GM13977 (cell line): ENCODE measurements at regions of chr13 and their contacts with region 1.

Region 1: DNA sequence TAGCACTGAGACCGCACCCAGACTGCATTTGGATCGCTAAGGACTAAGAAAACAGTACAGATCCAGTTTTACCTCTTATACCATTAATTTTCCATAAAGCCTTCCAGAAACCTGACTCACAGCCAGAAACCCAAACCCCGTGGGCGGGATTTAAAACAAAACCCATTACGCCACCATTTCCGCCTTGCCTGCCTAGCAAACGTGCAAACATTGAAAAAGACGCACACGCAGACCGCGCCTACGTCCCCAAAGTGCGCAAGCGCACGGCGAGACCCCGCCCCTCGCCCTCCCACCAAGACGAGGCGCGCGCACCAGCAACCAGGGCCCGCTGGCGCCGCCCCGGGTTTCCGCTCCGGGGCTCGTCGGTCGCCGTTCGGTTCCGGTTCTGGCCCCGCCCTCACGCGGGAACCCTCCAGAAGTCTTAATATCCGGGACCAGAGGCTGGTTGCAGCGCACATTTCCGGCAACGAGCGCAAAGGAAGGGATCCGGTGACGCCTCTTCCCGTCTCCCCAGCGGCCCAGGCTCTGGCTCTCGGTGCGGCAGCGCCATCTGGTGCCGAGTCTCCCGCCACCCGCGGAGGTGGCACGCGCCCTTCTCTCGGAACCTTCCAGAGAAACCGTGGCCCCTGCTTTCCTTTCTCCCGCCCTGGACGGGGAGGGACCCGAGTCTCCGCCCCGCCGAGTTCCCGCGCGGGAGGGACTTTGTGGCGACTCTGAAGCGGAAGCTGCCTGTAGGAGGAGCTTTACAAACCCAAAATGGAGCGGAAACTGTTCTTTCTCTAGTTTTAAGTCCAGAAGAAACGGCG is 256.9 kb upstream of the STARD13 start:
- DNase-seq: peak; percentile 89
- CTCF ChIP-seq: peak; percentile 88

Region 2: DNA sequence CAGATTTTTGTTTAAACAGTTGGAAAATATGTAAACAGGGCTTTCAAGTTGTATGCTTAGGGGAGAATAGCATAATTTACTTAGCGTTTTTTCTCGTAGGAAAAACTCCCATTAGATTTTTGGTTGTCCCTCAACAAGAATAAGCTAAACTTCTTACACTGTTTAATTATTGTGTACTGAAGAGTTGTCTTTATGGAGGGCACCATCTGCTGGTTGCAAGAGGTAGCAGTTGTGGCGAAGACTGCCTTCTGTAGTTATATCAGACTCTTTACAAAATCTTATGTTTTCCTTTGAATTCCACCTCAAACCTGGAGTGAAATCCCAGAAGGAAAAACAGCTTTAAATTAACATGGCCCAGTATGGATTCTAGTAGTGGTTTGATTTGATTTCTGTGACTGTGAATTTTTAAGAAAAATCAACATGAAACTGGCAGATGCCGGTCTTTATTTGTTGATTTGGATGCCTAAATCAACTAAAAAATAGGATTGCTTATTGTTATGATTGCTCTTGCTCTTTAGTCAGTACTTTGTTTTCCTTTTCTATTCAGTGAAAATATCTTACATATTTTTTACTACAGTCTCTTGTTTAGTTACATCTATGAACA is 902.9 kb before region 1 on chr13:
- in situ Hi-C with region 1: loop called (anchors 25 kb)
- DNase-seq: peak; percentile 40
- CTCF ChIP-seq: peak; percentile 71